ENCODE measurements at regions of chr15 and their contacts with region 1.

Region 1: GRCh38 chr15:74382004-74382816 is 14.8 kb upstream of the CYP11A1 start:
- DNase-seq: peak; percentile 82
- H3K4me3 Mint-ChIP-seq: no peak overlapping the region
- H3K27ac Mint-ChIP-seq: no peak overlapping the region
- H3K4me1 Mint-ChIP-seq: peaks cover 51% of the 10 kb centered on the region
- H3K27me3 Mint-ChIP-seq: no peaks in the 10 kb centered on the region

Region 2: DNA sequence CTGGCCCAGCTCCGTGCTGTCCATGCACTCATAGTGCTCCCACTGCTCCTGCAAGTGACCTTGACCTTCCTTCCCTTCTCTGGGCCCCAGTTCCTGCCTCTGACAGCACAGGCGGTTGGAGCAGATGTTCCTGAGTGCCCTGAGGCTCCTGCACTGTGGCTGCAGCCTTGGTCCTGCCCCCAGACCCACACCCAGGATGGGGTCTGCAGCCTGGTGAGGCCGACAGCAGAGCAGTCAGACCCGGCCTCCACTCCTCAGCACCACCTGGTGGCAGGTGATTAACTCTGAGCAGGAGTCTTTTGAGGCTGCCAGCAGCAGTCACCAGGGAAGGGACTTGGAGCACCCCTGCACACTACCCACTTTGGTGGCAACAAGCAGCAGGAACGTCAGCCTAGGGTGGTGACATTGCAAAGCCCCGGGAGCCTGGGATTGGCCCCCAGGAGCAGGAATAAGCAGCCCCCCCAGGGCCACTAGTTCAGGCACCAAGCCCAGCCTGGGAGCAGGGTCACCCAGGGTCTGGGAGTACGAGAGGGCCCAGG is 79.3 kb before region 1 on chr15:
- CTCF ChIA-PET with region 1: no interaction called
- POLR2A ChIA-PET with region 1: no interaction called
- DNase-seq: peak; percentile 40
- H3K4me3 Mint-ChIP-seq: no peak overlapping the region
- H3K27ac Mint-ChIP-seq: no peak overlapping the region
- H3K4me1 Mint-ChIP-seq: no peaks in the 10 kb centered on the region
- H3K27me3 Mint-ChIP-seq: peaks cover 54% of the 10 kb centered on the region

Region 3: GRCh38 chr15:74407055-74407691 is 25.0 kb after region 1 on chr15:
- CTCF ChIA-PET with region 1: interaction called, 61 read pairs
- POLR2A ChIA-PET with region 1: interaction called, 42 read pairs
- DNase-seq: no peak
- H3K4me3 Mint-ChIP-seq: no peak overlapping the region
- H3K27ac Mint-ChIP-seq: no peak overlapping the region
- H3K4me1 Mint-ChIP-seq: peaks cover 24% of the 10 kb centered on the region
- H3K27me3 Mint-ChIP-seq: no peaks in the 10 kb centered on the region

Region 4: GRCh38 chr15:74438721-74439316 is 56.6 kb after region 1 on chr15:
- CTCF ChIA-PET with region 1: interaction called, 248 read pairs
- POLR2A ChIA-PET with region 1: interaction called, 14 read pairs
- DNase-seq: peak; percentile 84
- H3K4me3 Mint-ChIP-seq: no peak overlapping the region
- H3K27ac Mint-ChIP-seq: no peak overlapping the region
- H3K4me1 Mint-ChIP-seq: peaks cover 19% of the 10 kb centered on the region
- H3K27me3 Mint-ChIP-seq: no peaks in the 10 kb centered on the region

Region 5: DNA sequence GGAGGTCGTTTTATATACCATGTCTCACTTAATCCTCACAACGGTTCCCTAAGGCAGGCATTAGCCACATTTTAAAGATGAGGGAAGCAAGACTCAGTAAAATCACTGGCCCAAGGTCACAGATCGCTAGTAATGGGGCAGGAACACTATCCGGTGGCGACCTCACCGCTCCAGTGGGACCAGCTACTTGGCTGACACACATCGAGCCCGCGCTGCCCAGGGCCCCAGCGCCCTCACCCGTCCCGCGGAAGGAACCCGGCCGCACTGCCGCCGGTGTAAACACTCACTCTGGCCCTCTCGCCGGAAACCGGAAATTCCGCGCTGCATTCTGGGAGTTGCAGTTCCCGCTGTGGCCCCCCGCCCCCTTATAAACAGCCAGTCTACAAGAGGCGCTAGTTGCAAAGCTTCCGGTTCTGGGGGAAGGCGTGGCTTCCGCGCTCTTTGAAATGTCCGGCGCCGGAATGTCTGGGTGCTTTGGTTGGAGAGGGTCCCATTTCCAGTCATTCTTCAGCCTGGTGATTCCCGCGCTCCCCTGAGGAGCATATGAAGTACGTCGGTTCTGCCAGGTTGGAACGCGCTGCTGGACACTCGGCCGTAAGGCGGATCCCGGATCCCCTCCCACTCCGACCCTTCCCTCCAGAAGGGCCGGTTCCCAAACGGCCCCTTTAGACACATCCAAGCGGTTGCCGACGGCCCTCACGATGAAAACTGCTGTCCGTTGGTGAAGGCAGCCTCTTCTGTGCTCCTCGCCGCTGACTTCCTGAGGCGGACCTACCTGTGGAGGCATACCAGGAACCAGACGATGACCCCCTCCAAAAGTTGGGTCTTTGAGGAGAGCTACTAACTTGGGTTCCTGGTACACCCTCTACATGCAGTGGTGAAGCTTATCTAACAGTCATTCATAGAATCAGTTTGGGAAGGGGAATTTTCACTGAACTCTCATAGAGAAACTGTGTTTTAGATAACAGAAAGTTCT is 78.9 kb after region 1 on chr15 and contains the start of gene UBL7:
- CTCF ChIA-PET with region 1: interaction called, 19 read pairs
- POLR2A ChIA-PET with region 1: interaction called, 13 read pairs
- DNase-seq: peak; percentile 99
- H3K4me3 Mint-ChIP-seq: peak within 1 kb of the TSS; percentile 93
- H3K27ac Mint-ChIP-seq: peak within 1 kb of the TSS; percentile 80
- H3K4me1 Mint-ChIP-seq: peaks cover 50% of the 10 kb centered on the region
- H3K27me3 Mint-ChIP-seq: no peaks in the 10 kb centered on the region
- total RNA-seq, gene UBL7: 54.7 to 61.3 TPM

Region 6: GRCh38 chr15:74545880-74546656 is 163.9 kb after region 1 on chr15:
- CTCF ChIA-PET with region 1: interaction called, 3 read pairs
- POLR2A ChIA-PET with region 1: interaction called, 14 read pairs
- DNase-seq: peak; percentile 89
- H3K4me3 Mint-ChIP-seq: peak overlapping the region; percentile 60
- H3K27ac Mint-ChIP-seq: peak overlapping the region; percentile 79
- H3K4me1 Mint-ChIP-seq: peaks cover 82% of the 10 kb centered on the region
- H3K27me3 Mint-ChIP-seq: no peaks in the 10 kb centered on the region